Activated CD8-positive, alpha-beta T cell treated with anti-CD3 and anti-CD28 coated beads for 36 hours (primary cell): ENCODE measurements at regions of chr20 and their contacts with region 1.

Region 1: DNA sequence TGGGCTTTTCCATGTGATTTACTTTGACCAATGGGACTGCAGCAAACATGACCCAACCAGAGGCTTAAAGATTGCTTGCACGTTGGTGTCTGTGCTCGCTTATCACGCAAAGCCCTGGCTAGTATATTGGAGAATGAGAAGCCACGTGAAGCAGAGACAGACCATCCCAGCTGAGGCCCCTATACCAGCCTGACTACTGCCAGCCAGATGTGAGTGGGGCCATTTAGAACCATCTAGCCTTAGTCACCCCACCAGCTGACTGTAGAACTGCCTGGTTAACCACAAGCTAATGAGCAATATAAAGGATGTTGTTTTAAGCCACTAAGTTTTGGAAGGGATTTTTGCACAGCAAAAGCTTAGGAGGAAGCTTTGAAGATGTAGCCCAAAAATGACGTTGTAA is 74.5 kb downstream of the MACROD2 start:
- DNase-seq: no peak
- ATAC-seq: no peak
- H3K4me3 Mint-ChIP-seq: no peak overlapping the region
- H3K27ac Mint-ChIP-seq: no peak overlapping the region
- H3K4me1 Mint-ChIP-seq: no peaks in the 10 kb centered on the region
- H3K27me3 Mint-ChIP-seq: no peaks in the 10 kb centered on the region
- CTCF ChIP-seq: no peak

Region 2: DNA sequence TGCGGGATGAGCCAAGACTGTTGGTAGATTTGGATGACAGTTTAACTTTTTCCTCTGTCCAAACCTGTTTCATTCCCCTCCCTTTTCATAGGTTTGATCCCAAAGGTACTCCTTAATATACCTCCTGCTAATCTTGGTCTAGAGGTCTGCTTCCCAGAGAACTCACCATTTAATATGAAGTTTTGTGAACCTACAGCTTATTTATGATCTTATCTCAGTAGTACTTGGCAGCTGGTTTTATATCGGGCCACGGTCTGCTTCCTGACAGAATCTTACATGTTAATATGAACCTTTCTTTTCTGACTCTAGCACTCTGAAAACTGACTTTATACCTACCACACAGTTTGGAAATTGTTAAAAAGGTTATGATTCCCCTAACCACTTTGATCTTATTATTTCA is 64.2 kb after region 1 on chr20:
- CTCF ChIA-PET with region 1: no interaction called
- POLR2A ChIA-PET with region 1: no interaction called
- intact Hi-C with region 1: loop called (anchors 10 kb)
- DNase-seq: no peak
- ATAC-seq: no peak
- H3K4me3 Mint-ChIP-seq: no peak overlapping the region
- H3K27ac Mint-ChIP-seq: no peak overlapping the region
- H3K4me1 Mint-ChIP-seq: no peaks in the 10 kb centered on the region
- H3K27me3 Mint-ChIP-seq: no peaks in the 10 kb centered on the region
- CTCF ChIP-seq: no peak

Region 3: GRCh38 chr20:14235355-14235754 is 165.6 kb after region 1 on chr20:
- CTCF ChIA-PET with region 1: no interaction called
- POLR2A ChIA-PET with region 1: no interaction called
- intact Hi-C with region 1: no loop called
- DNase-seq: no peak
- ATAC-seq: no peak
- H3K4me3 Mint-ChIP-seq: no peak overlapping the region
- H3K27ac Mint-ChIP-seq: no peak overlapping the region
- H3K4me1 Mint-ChIP-seq: no peaks in the 10 kb centered on the region
- H3K27me3 Mint-ChIP-seq: no peaks in the 10 kb centered on the region
- CTCF ChIP-seq: no peak